WTC11 (cell line): ENCODE measurements at regions of chr16 and their contacts with region 1.

Region 1: GRCh38 chr16:19113453-19114351 is at the start of gene ITPRIPL2:
- DNase-seq: peak; percentile 58
- ATAC-seq: peak; percentile 56
- H3K4me3 Mint-ChIP-seq: peak within 1 kb of the TSS; percentile 60
- H3K27ac Mint-ChIP-seq: no peak within 1 kb of the TSS
- H3K4me1 Mint-ChIP-seq: peaks cover 21% of the 10 kb centered on the region
- H3K27me3 Mint-ChIP-seq: peaks cover 55% of the 10 kb centered on the region
- CTCF ChIP-seq: no peak
- total RNA-seq, gene ITPRIPL2: 5.3 to 7.1 TPM (median 6.6 TPM) in 3 replicates

Region 2: GRCh38 chr16:19086322-19087199 is 27.1 kb before region 1 on chr16:
- CTCF ChIA-PET with region 1: interaction called, 16 read pairs
- POLR2A ChIA-PET with region 1: no interaction called
- DNase-seq: peak; percentile 89
- ATAC-seq: peak; percentile 94
- H3K4me3 Mint-ChIP-seq: peak overlapping the region; percentile 67
- H3K27ac Mint-ChIP-seq: no peak overlapping the region
- H3K4me1 Mint-ChIP-seq: peaks cover 4% of the 10 kb centered on the region; the same call in 1 of the 2 replicates
- H3K27me3 Mint-ChIP-seq: peaks cover 18% of the 10 kb centered on the region
- CTCF ChIP-seq: peak; percentile 87

Region 3: DNA sequence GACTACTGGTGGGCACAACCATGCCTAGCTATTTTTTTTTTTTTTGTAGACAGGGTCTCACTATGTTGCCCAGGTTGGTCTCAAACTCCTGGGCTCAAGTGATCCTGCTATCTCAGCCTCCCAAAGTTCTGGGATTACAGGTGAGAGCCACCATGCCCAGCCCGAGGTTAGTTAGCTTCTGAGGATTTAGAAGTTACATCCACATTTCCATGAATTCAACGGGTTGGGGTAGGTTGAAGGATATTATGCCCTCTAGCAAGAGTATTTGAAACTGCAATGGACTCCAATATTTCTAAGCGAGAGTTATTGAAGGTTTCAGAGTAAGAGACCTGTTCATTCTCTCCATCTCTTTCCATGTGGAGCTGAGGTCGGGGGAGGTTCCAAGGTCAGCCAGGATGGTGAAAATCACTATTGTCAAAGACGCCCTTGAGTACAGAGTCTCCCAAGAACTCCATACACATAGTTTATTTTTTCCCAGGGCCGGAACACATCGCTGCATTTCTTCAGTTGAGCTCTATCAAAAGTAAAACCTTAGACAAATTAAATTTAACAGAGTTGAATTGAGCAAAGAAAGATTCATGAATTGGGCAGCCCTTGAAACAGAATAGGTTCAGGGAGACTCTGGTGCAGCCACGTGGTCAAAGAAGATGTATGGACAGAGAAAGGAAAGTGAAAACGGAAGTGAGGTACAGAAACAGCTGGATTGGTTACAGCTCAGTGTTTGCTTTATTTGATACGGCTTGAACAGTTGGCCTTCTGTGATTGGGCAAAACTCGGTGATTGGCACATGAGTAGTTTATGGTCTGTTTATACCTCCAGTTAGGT is 18.9 kb before region 1 on chr16:
- CTCF ChIA-PET with region 1: interaction called, 29 read pairs
- POLR2A ChIA-PET with region 1: no interaction called
- DNase-seq: no peak
- ATAC-seq: no peak
- H3K4me3 Mint-ChIP-seq: no peak overlapping the region
- H3K27ac Mint-ChIP-seq: no peak overlapping the region
- H3K4me1 Mint-ChIP-seq: peaks cover 11% of the 10 kb centered on the region; the same call in 1 of the 2 replicates
- H3K27me3 Mint-ChIP-seq: peaks cover 2% of the 10 kb centered on the region
- CTCF ChIP-seq: no peak

Region 4: GRCh38 chr16:19130852-19131810 is 17.4 kb after region 1 on chr16:
- CTCF ChIA-PET with region 1: interaction called, 14 read pairs
- POLR2A ChIA-PET with region 1: no interaction called
- DNase-seq: no peak
- ATAC-seq: peak; percentile 66
- H3K4me3 Mint-ChIP-seq: no peak overlapping the region
- H3K27ac Mint-ChIP-seq: peak overlapping the region; percentile 39
- H3K4me1 Mint-ChIP-seq: peaks cover 44% of the 10 kb centered on the region
- H3K27me3 Mint-ChIP-seq: peaks cover 3% of the 10 kb centered on the region; the same call in 1 of the 2 replicates
- CTCF ChIP-seq: no peak

Region 5: DNA sequence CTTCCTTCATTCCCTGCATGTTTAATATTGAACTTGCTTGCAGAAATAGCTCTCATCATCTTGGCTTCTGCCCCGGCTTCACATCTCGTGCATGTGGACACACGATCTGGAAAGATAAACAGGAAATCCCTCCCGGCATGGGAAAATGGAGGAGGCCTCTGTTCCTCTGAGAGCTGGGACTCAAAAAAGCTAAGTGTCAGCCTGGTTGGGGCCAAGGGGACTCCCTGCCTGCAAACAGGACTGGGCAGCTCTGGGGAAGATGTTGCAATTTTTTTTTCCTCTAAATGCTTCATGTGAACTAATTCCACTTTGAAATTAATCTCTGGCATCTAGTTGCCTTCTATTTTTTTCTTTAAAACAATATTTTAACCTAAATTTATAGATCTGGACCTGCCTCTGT is 24.9 kb after region 1 on chr16:
- CTCF ChIA-PET with region 1: interaction called, 11 read pairs
- POLR2A ChIA-PET with region 1: no interaction called
- DNase-seq: no peak
- ATAC-seq: no peak
- H3K4me3 Mint-ChIP-seq: no peak overlapping the region
- H3K27ac Mint-ChIP-seq: no peak overlapping the region
- H3K4me1 Mint-ChIP-seq: peaks cover 19% of the 10 kb centered on the region
- H3K27me3 Mint-ChIP-seq: no peaks in the 10 kb centered on the region
- CTCF ChIP-seq: no peak

Region 6: GRCh38 chr16:19215705-19216104 is 102.0 kb after region 1 on chr16:
- CTCF ChIA-PET with region 1: no interaction called
- POLR2A ChIA-PET with region 1: no interaction called
- DNase-seq: no peak
- ATAC-seq: no peak
- H3K4me3 Mint-ChIP-seq: no peak overlapping the region
- H3K27ac Mint-ChIP-seq: no peak overlapping the region
- H3K4me1 Mint-ChIP-seq: peaks cover 5% of the 10 kb centered on the region
- H3K27me3 Mint-ChIP-seq: peaks cover 4% of the 10 kb centered on the region
- CTCF ChIP-seq: no peak